Left cardiac atrium (tissue), 4 donors: ENCODE measurements at regions of chr22 and their contacts with region 1.

Region 1: DNA sequence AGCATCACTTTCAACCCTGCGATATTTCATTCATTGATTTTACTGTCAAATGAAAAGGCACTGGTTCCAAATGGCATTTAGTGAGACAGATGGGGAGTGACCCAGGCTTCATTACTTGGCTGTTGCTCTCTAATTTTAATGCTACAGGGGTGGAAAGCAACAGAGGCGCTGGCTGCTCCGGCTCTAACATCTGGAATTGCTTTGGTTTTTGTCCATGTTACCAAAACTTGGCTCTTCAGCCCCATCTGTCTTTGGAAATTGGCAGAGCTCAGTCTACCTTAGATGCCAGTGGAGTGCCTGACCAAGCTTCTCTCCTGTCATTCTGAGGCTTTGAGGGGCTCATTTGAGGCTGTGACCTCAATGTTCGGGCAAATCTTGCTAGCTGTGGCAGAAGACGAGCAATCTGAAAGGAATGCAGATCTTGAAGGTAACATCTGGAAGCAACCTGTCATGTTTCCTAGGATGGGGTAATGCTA is 409.5 kb upstream of the SYN3 start:
- DNase-seq: no peak
- ATAC-seq: peak in 1 of 2 donors; percentile 25

Region 2: GRCh38 chr22:33401291-33401690 is 66.4 kb before region 1 on chr22:
- intact Hi-C with region 1: loop called in 1 of 2 experiments (anchors 10 kb)
- DNase-seq: no peak
- ATAC-seq: no peak